ENCODE measurements at regions of chr21 and their contacts with region 1.

Region 1: DNA sequence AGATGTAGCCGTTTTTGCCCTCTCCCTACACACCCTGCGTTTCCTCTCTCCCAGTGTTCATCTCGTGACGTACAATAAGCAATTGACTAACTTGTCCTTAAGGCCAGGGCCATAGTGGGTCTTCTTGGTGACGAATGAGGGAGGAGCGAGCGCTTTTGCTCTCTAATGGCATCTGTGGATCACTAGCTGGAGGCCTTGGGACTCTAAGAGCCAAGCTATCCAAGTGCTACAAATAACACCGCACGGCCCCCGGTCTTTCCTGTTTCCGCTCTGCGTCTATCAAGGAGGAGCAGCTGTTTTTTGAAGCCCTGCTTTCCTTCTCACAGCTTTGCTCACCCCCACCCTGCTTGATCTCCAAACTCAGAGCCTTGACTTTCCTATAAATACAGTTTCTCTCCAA is 25.2 kb downstream of the EVA1C start:
- DNase-seq: no peak
- H3K4me3 Mint-ChIP-seq: no peak overlapping the region
- H3K27ac Mint-ChIP-seq: no peak overlapping the region
- H3K4me1 Mint-ChIP-seq: peaks cover 11% of the 10 kb centered on the region
- H3K27me3 Mint-ChIP-seq: peaks cover 43% of the 10 kb centered on the region
- CTCF ChIP-seq: no peak

Region 2: DNA sequence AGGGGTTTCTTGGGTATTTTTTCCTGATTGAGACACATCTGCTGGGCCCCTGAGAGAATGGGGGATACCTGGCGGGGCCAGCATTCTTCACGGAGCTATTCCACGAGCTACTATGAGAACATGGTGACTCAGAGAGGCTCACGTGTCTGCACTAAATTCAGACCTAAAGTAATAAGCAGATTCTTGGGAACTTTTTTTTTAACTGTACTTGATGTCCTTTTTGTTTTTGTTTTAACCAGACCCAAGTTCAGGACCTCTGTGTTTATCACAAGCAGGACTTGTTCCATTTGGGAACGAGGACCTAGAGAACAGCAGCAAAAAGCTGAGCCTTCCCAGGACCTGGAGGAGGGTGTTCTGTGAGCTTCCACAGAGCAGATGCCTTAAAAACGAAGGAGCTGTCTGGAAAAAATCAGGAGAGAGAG is 18.8 kb after region 1 on chr21:
- CTCF ChIA-PET with region 1: no interaction called
- intact Hi-C with region 1: no loop called
- DNase-seq: no peak
- H3K4me3 Mint-ChIP-seq: no peak overlapping the region
- H3K27ac Mint-ChIP-seq: no peak overlapping the region
- H3K4me1 Mint-ChIP-seq: peaks cover 21% of the 10 kb centered on the region
- H3K27me3 Mint-ChIP-seq: no peaks in the 10 kb centered on the region
- CTCF ChIP-seq: no peak

Region 3: GRCh38 chr21:32477424-32477745 is 39.7 kb after region 1 on chr21:
- CTCF ChIA-PET with region 1: no interaction called
- intact Hi-C with region 1: loop called (anchors 2 kb)
- DNase-seq: no peak
- H3K4me3 Mint-ChIP-seq: no peak overlapping the region
- H3K27ac Mint-ChIP-seq: no peak overlapping the region
- H3K4me1 Mint-ChIP-seq: peaks cover 8% of the 10 kb centered on the region
- H3K27me3 Mint-ChIP-seq: no peaks in the 10 kb centered on the region
- CTCF ChIP-seq: no peak

Measured in Calu3 (cell line).